CD4-positive, alpha-beta memory T cell (primary cell): ENCODE measurements at regions of chr14 and their contacts with region 1.

Region 1: DNA sequence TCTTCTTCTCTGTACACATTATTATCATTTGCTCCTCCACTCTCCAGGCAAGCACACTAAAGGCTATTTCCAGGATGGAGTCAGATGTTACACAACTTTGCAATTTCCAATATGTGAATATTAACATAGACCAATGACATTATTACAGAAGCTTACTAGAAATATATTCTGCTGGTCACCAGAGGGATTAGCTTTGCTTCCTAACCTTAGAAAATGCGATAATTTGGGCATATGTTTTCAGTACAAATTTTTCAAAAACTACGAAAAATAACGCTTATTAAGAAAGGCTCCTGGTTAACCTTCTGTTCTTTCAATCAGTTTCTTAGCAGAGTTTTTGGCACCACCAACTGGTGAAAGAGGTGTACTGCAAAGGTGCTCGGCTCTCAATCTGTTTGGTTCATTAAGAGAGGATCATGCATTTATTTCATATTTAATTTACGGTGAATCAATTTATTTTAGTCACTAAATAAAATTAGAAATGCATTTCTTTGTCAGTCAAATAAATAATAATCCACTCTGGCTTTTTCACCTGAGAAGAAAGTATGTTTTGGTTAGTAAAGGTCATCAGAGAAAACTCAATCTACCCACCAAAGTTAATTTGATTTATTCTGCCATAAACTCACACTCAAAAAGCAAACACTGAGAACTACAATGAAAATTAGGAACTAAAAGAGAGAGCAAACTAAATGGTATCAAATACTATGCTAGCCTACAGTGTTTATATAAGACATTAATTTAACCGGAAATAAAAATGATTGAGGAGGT is 39.2 kb downstream of the EFCAB11 start:
- DNase-seq: peak; percentile 53 to 69 (median 63)
- H3K4me3 ChIP-seq: no peak overlapping the region
- H3K4me3 Mint-ChIP-seq: no peak overlapping the region
- H3K27ac ChIP-seq: no peak overlapping the region
- H3K27ac Mint-ChIP-seq: peak overlapping the region in 1 of 7 donors; percentile 19
- H3K4me1 ChIP-seq: peaks cover 4% of the 10 kb centered on the region
- H3K4me1 Mint-ChIP-seq: peaks cover 0 to 4% (median 3%) of the 10 kb centered on the region in 4 donors
- H3K27me3 ChIP-seq: no peaks in the 10 kb centered on the region
- H3K27me3 Mint-ChIP-seq: peaks cover 4% of the 10 kb centered on the region in 2 donors

Region 2: DNA sequence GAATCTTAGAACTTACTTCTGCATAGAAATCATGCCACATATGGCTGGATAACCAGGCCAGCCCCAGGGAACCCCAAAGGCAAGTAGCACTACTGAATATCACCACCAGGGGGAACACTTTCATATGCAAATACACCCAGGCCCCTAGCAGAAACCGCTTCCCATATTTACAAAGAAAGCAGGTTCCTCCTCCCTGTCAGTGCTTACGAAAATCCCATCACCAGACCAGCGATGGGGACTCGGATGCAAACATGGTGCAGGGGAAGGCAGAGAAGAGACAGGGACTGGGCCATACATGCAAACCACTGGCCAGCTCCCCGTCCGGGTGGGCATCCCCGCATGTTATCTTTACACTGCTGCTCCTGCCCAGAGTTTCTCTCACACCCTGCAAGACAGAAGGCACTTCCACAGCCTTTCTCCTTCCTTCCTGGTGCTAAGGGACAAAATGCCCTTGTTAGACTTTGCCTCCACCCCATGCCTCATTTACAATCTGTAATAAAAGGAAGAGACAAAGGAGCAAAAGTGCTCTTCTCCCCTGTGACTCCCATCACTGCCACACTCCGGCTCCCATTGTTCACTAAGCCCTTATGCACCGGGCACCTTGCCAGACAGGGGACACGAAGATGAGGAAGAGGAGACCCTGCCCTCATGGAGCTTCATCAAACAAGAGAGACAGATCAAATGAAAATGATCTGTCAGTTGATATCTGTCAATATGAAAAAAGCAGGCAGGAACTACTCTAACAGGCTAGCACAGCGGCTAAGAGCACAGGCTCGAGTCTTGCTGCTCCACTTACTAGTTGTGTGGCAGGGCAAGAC is 1422.8 kb before region 1 on chr14:
- CTCF ChIA-PET with region 1: no interaction called
- POLR2A ChIA-PET with region 1: no interaction called
- intact Hi-C with region 1: loop called (anchors 2 kb)
- DNase-seq: peak; percentile 53 to 65 (median 56)
- H3K4me3 ChIP-seq: no peak overlapping the region
- H3K4me3 Mint-ChIP-seq: no peak overlapping the region
- H3K27ac ChIP-seq: no peak overlapping the region
- H3K27ac Mint-ChIP-seq: peak overlapping the region in 1 of 7 donors; percentile 15
- H3K4me1 ChIP-seq: no peaks in the 10 kb centered on the region
- H3K4me1 Mint-ChIP-seq: no peaks in the 10 kb centered on the region
- H3K27me3 ChIP-seq: no peaks in the 10 kb centered on the region
- H3K27me3 Mint-ChIP-seq: peaks cover 1 to 3% of the 10 kb centered on the region in 2 donors

Region 3: DNA sequence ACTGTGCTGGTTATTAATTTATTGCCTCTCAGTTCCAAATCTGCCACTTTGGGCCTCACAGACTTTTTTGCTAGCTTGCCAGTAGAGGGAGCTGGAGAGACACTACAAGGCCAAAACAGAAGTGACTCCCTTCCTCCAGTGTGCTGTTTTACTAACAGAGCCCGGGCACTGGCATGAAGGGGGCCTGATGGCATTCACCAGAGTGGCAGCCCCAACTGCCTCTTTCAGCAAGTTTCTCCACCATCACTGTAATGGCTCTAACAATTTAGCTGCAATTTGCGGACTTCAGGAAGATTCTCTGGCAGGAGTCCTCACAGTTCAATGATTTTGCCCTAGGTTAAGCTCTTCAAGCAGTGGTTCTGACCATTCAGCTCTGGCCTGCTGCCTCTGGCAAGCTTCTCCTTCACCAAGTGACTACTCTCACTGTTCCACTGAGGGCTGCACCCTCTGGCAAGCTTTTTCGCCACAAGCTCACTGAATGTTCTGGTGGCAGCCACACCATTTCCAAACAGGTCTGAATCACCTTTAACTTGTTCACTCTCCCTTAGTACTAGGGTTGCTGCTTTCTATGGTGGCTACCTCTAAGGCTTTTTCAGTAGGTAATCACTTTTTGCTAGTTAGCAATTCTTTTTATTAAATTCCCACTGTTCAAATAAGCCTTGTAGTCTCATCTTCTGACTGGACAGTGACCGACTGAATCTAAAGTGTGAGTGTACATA is 1247.6 kb before region 1 on chr14:
- CTCF ChIA-PET with region 1: interaction called, 3 read pairs
- POLR2A ChIA-PET with region 1: no interaction called
- intact Hi-C with region 1: loop called (anchors 1 kb)
- DNase-seq: peak; percentile 53 to 60 (median 55)
- H3K4me3 ChIP-seq: no peak overlapping the region
- H3K4me3 Mint-ChIP-seq: no peak overlapping the region
- H3K27ac ChIP-seq: no peak overlapping the region
- H3K27ac Mint-ChIP-seq: peak overlapping the region in 2 of 7 donors; percentile 24 to 43
- H3K4me1 ChIP-seq: no peaks in the 10 kb centered on the region
- H3K4me1 Mint-ChIP-seq: peaks cover 0 to 2% (median 0%) of the 10 kb centered on the region in 4 donors
- H3K27me3 ChIP-seq: no peaks in the 10 kb centered on the region
- H3K27me3 Mint-ChIP-seq: no peaks in the 10 kb centered on the region

Region 4: DNA sequence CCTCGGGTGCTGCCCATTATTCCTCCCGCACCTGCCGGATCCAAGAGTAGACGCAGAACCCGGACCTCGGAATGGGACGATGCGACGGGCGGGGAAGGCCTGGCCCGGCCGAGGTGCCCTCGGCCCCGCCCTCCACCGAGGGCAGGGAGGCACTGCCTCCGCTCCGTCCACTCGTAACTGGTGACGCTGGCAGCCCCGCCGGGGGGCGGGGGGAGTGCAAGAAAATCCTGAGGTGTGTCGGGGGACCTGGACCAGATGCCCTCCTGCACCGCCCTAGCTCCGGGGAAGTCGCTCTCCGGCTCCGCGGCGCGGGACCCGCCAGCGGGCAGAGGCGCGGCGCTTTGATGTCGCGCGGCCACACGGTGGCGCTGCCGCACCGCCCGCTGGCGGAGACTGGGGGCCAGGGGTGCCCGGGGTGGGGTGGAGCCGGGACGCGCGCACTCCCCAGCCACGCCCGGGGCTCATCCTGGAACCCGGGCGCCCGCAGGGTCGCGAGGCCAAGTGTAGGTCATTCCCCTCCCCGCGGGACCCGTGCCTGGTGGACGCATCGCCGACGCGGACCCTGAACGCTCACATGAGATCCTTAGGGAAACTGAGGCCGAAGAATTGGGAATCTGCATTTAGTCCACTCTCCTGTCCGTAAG is 888.1 kb before region 1 on chr14:
- CTCF ChIA-PET with region 1: interaction called, 37 read pairs
- POLR2A ChIA-PET with region 1: no interaction called
- intact Hi-C with region 1: loop called (anchors 1 kb)
- DNase-seq: peak; percentile 46 to 65 (median 57)
- H3K4me3 ChIP-seq: peak overlapping the region; percentile 17 to 42
- H3K4me3 Mint-ChIP-seq: peak overlapping the region; percentile 52 to 76 (median 68)
- H3K27ac ChIP-seq: no peak overlapping the region
- H3K27ac Mint-ChIP-seq: no peak overlapping the region
- H3K4me1 ChIP-seq: peaks cover 11% of the 10 kb centered on the region
- H3K4me1 Mint-ChIP-seq: peaks cover 5 to 13% (median 9%) of the 10 kb centered on the region in 4 donors
- H3K27me3 ChIP-seq: peaks cover 15% of the 10 kb centered on the region
- H3K27me3 Mint-ChIP-seq: peaks cover 41 to 52% of the 10 kb centered on the region in 2 donors

Region 5: DNA sequence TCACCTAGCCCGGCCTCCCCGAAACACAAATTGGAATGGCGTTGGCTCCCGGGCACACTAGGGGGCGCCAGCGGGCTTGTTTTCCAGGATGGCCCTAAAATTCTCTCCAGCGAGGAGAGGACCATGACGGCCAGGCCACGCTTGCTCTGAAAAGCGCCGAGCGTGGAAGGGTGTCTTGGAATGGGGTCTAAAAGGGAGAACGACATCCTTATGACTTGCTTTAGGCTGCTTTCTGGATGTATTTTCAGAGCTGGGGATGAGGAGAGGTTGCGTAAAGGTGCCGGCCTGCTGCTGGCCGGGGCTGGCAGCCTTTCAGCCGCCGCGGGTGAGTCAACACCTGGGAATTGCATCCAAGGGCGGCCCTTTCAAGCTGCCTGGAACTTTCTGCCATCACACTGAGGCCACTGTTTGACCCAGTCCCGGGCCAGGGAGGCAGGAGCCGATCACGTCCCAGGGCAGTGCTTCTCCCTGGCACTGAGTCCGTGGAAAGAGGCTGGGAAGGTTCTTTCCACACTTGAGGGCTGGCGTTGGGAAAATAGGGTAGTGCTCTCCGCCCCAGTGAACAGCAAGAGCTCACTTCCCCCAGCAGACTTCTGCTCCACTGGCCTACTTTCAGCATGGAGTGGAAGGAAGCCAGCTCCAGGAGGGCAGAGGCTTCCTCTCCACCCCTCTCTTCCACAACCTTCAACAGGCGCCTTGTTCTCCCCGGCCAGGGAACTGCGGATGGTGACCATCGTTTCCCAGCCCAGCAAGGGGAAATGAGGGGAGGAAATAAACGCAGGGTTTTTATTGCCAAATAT is 874.6 kb before region 1 on chr14:
- CTCF ChIA-PET with region 1: interaction called, 31 read pairs
- POLR2A ChIA-PET with region 1: no interaction called
- intact Hi-C with region 1: loop called (anchors 1 kb)
- DNase-seq: peak; percentile 67 to 74 (median 68)
- H3K4me3 ChIP-seq: no peak overlapping the region
- H3K4me3 Mint-ChIP-seq: peak overlapping the region; percentile 53 to 85 (median 78)
- H3K27ac ChIP-seq: no peak overlapping the region
- H3K27ac Mint-ChIP-seq: no peak overlapping the region
- H3K4me1 ChIP-seq: peaks cover 11% of the 10 kb centered on the region
- H3K4me1 Mint-ChIP-seq: peaks cover 4 to 9% (median 7%) of the 10 kb centered on the region in 4 donors
- H3K27me3 ChIP-seq: peaks cover 5% of the 10 kb centered on the region
- H3K27me3 Mint-ChIP-seq: peaks cover 12 to 14% of the 10 kb centered on the region in 2 donors

Region 6: GRCh38 chr14:89178802-89179535 is 736.3 kb before region 1 on chr14:
- CTCF ChIA-PET with region 1: interaction called, 12 read pairs
- POLR2A ChIA-PET with region 1: no interaction called
- intact Hi-C with region 1: loop called (anchors 1 kb)
- DNase-seq: no peak
- H3K4me3 ChIP-seq: no peak overlapping the region
- H3K4me3 Mint-ChIP-seq: no peak overlapping the region
- H3K27ac ChIP-seq: no peak overlapping the region
- H3K27ac Mint-ChIP-seq: peak overlapping the region in 2 of 7 donors; percentile 25 to 38
- H3K4me1 ChIP-seq: peaks cover 5% of the 10 kb centered on the region
- H3K4me1 Mint-ChIP-seq: peaks cover 10 to 32% (median 23%) of the 10 kb centered on the region in 4 donors
- H3K27me3 ChIP-seq: no peaks in the 10 kb centered on the region
- H3K27me3 Mint-ChIP-seq: no peaks in the 10 kb centered on the region

Region 7: DNA sequence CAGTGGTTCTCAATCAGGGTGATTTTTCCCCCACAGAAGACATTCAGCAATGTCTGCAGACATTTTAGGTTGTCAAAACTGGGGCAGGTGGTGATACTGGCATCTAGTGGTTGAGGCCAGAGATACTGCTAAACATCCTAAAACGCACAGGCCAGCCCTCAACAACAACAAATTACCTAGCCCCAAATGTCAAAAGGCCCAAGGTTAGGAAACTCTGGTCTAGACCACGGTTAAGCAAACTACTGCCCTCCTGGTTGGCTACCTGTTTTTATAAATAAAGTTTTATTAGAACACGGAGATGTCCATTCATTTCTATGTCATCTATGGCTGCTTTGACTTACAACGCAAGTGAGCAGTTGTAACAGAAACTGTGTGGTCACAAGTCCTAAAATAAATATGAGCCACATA is 147.4 kb before region 1 on chr14:
- CTCF ChIA-PET with region 1: no interaction called
- POLR2A ChIA-PET with region 1: no interaction called
- intact Hi-C with region 1: loop called (anchors 1 kb)
- DNase-seq: peak; percentile 64 to 69 (median 67)
- H3K4me3 ChIP-seq: no peak overlapping the region
- H3K4me3 Mint-ChIP-seq: peak overlapping the region in 4 of 8 donors; percentile 51 to 62 (median 60)
- H3K27ac ChIP-seq: no peak overlapping the region
- H3K27ac Mint-ChIP-seq: peak overlapping the region in 2 of 7 donors; percentile 2 to 56
- H3K4me1 ChIP-seq: peaks cover 9% of the 10 kb centered on the region
- H3K4me1 Mint-ChIP-seq: peaks cover 13 to 32% (median 25%) of the 10 kb centered on the region in 4 donors
- H3K27me3 ChIP-seq: no peaks in the 10 kb centered on the region
- H3K27me3 Mint-ChIP-seq: peaks cover 0 to 2% of the 10 kb centered on the region in 2 donors

Region 8: GRCh38 chr14:89892953-89893352 is 22.3 kb before region 1 on chr14:
- CTCF ChIA-PET with region 1: no interaction called
- POLR2A ChIA-PET with region 1: no interaction called
- intact Hi-C with region 1: no loop called
- DNase-seq: no peak
- H3K4me3 ChIP-seq: no peak overlapping the region
- H3K4me3 Mint-ChIP-seq: no peak overlapping the region
- H3K27ac ChIP-seq: no peak overlapping the region
- H3K27ac Mint-ChIP-seq: no peak overlapping the region
- H3K4me1 ChIP-seq: no peaks in the 10 kb centered on the region
- H3K4me1 Mint-ChIP-seq: no peaks in the 10 kb centered on the region
- H3K27me3 ChIP-seq: no peaks in the 10 kb centered on the region
- H3K27me3 Mint-ChIP-seq: no peaks in the 10 kb centered on the region